Uterus (tissue), 4 donors: ENCODE measurements at regions of chr22 and their contacts with region 1.

Region 1: GRCh38 chr22:23395530-23396361 is 184.3 kb downstream of the IGLL1 start:
- DNase-seq: no peak
- H3K4me3 ChIP-seq: no peak overlapping the region
- H3K27ac ChIP-seq: no peak overlapping the region
- H3K4me1 ChIP-seq: no peaks in the 10 kb centered on the region
- H3K27me3 ChIP-seq: no peaks in the 10 kb centered on the region
- CTCF ChIP-seq: no peak
- POLR2A ChIP-seq: no peak

Region 2: DNA sequence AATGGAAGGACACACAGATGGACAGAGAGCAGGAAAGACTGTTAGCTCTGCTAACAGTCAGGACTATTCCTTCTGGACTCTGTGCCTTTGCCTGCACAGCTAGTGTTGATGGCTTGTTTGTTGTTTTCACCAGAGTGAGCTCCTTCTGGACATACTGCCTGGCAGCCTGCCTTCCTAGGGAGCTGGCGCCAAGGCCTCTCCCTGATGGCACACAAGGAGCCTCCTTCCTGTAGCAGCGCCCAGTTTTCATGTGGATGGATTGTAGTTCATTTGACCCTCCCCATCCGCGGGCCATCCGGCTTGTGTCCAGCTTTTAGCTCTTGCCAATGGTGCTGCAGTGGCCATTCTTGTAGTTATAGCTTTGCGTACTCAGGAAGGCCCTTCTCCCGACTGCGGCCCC is 232.1 kb before region 1 on chr22:
- intact Hi-C with region 1: loop called (anchors 10 kb)
- DNase-seq: peak; percentile 46 to 51
- H3K4me3 ChIP-seq: no peak overlapping the region
- H3K27ac ChIP-seq: peak overlapping the region in 1 of 2 donors; percentile 36
- H3K4me1 ChIP-seq: no peaks in the 10 kb centered on the region
- H3K27me3 ChIP-seq: no peaks in the 10 kb centered on the region
- CTCF ChIP-seq: no peak
- POLR2A ChIP-seq: no peak